ENCODE measurements at regions of chr10 and their contacts with region 1.

Region 1: GRCh38 chr10:63083904-63084689 is 49.0 kb upstream of the NRBF2 start:
- DNase-seq: peak; percentile 73
- ATAC-seq: peak; percentile 84
- H3K4me3 ChIP-seq: no peak overlapping the region
- H3K27ac ChIP-seq: no peak overlapping the region
- H3K4me1 ChIP-seq: no peaks in the 10 kb centered on the region
- H3K27me3 ChIP-seq: no peaks in the 10 kb centered on the region

Region 2: GRCh38 chr10:62594093-62594520 is 490.0 kb before region 1 on chr10:
- intact Hi-C with region 1: loop called in 1 of 2 experiments (anchors 10 kb)
- DNase-seq: peak; percentile 61 to 81
- ATAC-seq: peak; percentile 82
- H3K4me3 ChIP-seq: no peak overlapping the region
- H3K27ac ChIP-seq: no peak overlapping the region
- H3K4me1 ChIP-seq: no peaks in the 10 kb centered on the region
- H3K27me3 ChIP-seq: no peaks in the 10 kb centered on the region

Measured in aorta (tissue), 5 donors.